Calu3 (cell line): ENCODE measurements at regions of chr6 and their contacts with region 1.

Region 1: GRCh38 chr6:43667245-43668150 is 20.1 kb downstream of the MRPS18A start:
- DNase-seq: peak; percentile 94
- H3K4me3 Mint-ChIP-seq: peak overlapping the region; percentile 43
- H3K27ac Mint-ChIP-seq: peak overlapping the region; percentile 80
- H3K4me1 Mint-ChIP-seq: peaks cover 40% of the 10 kb centered on the region
- H3K27me3 Mint-ChIP-seq: no peaks in the 10 kb centered on the region
- CTCF ChIP-seq: peak; percentile 98

Region 2: GRCh38 chr6:43541774-43542471 is 125.6 kb before region 1 on chr6:
- CTCF ChIA-PET with region 1: no interaction called
- intact Hi-C with region 1: no loop called
- DNase-seq: no peak
- H3K4me3 Mint-ChIP-seq: no peak overlapping the region
- H3K27ac Mint-ChIP-seq: no peak overlapping the region
- H3K4me1 Mint-ChIP-seq: no peaks in the 10 kb centered on the region
- H3K27me3 Mint-ChIP-seq: no peaks in the 10 kb centered on the region
- CTCF ChIP-seq: no peak

Region 3: GRCh38 chr6:43621429-43622180 is 45.9 kb before region 1 on chr6:
- CTCF ChIA-PET with region 1: no interaction called
- intact Hi-C with region 1: no loop called
- DNase-seq: no peak
- H3K4me3 Mint-ChIP-seq: no peak overlapping the region
- H3K27ac Mint-ChIP-seq: peak overlapping the region; percentile 34
- H3K4me1 Mint-ChIP-seq: peaks cover 10% of the 10 kb centered on the region
- H3K27me3 Mint-ChIP-seq: no peaks in the 10 kb centered on the region
- CTCF ChIP-seq: no peak

Region 4: GRCh38 chr6:43687437-43688347 is 20.2 kb after region 1 on chr6 and contains the start of gene MRPS18A:
- CTCF ChIA-PET with region 1: interaction called, 10 read pairs
- intact Hi-C with region 1: no loop called
- DNase-seq: peak; percentile 95
- H3K4me3 Mint-ChIP-seq: peak within 1 kb of the TSS; percentile 97
- H3K27ac Mint-ChIP-seq: peak within 1 kb of the TSS; percentile 93
- H3K4me1 Mint-ChIP-seq: peaks cover 49% of the 10 kb centered on the region
- H3K27me3 Mint-ChIP-seq: no peaks in the 10 kb centered on the region
- CTCF ChIP-seq: no peak
- total RNA-seq, gene MRPS18A: 88.8 and 106 TPM in 2 replicates

Region 5: DNA sequence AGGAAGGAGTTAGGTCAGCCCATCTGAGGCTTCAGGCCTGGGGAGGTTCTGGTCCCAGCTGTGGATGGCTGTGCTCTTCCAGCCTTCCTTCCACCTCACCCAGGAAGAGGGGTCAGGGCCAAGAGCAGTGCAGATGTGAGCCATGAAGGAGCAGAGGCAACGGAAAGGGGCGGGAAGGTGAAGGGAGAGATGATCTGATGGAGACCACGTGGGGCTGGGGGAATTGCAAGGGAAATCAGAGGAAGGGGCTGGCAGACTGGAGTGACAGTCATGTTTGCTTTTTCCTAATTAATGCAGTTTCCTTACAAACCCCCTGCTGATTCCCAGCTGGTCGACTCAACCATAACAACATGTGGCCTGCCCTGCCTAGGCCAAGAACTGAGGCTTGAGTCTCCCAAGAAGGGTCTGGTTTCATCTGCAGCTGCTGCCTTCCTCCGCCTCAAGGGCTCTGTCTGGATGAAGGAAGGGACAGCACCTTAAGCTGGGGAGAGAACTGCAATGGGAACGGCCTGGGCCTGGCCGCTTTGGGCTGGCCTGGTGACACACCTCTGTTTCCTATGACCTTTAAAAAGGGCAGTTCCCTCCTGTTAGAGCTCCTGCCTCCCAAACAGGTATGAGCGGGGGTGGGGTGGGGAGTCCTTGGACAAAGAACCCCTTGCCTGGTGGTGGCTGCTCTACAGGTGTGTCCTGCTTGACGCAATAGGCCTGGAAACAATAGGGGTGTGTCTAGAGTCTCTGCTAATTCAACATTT is 27.9 kb after region 1 on chr6:
- CTCF ChIA-PET with region 1: interaction called, 10 read pairs
- intact Hi-C with region 1: loop called (anchors 5 kb)
- DNase-seq: peak; percentile 95
- H3K4me3 Mint-ChIP-seq: peak overlapping the region; percentile 33
- H3K27ac Mint-ChIP-seq: peak overlapping the region; percentile 81
- H3K4me1 Mint-ChIP-seq: peaks cover 45% of the 10 kb centered on the region
- H3K27me3 Mint-ChIP-seq: no peaks in the 10 kb centered on the region
- CTCF ChIP-seq: no peak

Region 6: DNA sequence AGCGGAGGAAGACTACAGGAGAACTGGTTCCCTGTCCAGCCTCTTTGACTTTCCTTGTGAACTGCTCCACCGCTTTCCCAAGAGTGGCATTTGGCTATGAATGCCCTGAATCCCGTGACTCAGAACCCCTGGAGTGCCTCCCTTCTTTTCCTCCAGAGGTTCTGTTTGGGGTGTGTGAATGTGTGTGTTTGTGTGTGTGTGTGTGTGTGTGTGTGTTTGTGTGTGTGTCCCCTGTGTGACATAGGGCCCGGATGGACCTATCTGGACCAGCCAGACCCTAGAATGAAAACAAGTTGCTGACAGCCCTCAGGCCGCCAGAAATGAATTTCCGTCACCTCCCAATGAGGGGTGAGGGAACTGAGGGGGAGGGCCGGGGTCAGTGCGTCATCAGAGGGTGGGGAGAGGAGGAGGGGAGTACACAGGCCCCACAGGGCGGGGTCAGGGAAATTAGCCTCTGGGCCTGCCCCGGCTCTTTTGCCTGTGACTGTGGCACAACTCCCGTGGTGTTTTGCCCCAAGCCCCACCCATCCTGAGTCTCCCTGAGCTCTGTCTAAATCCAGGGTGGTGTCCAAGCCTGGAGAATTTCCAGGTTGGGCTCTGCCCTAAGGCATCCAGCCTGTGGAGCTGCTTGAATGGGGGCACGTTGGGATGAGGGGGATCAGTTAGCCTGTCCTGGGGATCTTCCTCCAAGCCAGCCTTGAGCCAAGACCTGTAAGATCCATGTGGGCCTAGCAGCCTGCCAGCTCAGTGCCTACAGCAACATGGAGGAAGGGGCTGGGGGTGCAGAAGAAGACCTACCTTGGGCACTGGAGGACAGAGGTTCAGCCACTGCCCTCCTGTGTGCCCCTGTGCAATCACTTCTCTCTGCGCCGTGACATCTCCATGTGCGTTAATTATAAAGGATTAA is 35.3 kb after region 1 on chr6:
- CTCF ChIA-PET with region 1: interaction called, 4 read pairs
- intact Hi-C with region 1: loop called (anchors 5 kb)
- DNase-seq: peak; percentile 98
- H3K4me3 Mint-ChIP-seq: peak overlapping the region; percentile 17
- H3K27ac Mint-ChIP-seq: peak overlapping the region; percentile 58
- H3K4me1 Mint-ChIP-seq: peaks cover 73% of the 10 kb centered on the region
- H3K27me3 Mint-ChIP-seq: no peaks in the 10 kb centered on the region
- CTCF ChIP-seq: no peak

Region 7: DNA sequence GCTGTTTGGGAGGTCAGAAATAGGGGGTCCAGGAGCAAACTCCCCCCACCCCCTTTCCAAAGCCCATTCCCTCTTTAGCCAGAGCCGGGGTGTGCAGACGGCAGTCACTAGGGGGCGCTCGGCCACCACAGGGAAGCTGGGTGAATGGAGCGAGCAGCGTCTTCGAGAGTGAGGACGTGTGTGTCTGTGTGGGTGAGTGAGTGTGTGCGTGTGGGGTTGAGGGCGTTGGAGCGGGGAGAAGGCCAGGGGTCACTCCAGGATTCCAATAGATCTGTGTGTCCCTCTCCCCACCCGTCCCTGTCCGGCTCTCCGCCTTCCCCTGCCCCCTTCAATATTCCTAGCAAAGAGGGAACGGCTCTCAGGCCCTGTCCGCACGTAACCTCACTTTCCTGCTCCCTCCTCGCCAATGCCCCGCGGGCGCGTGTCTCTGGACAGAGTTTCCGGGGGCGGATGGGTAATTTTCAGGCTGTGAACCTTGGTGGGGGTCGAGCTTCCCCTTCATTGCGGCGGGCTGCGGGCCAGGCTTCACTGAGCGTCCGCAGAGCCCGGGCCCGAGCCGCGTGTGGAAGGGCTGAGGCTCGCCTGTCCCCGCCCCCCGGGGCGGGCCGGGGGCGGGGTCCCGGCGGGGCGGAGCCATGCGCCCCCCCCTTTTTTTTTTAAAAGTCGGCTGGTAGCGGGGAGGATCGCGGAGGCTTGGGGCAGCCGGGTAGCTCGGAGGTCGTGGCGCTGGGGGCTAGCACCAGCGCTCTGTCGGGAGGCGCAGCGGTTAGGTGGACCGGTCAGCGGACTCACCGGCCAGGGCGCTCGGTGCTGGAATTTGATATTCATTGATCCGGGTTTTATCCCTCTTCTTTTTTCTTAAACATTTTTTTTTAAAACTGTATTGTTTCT is 102.3 kb after region 1 on chr6 and contains the start of gene VEGFA:
- CTCF ChIA-PET with region 1: interaction called, 41 read pairs
- intact Hi-C with region 1: loop called (anchors 1 kb)
- DNase-seq: peak; percentile 97
- H3K4me3 Mint-ChIP-seq: peak within 1 kb of the TSS; percentile 87
- H3K27ac Mint-ChIP-seq: peak within 1 kb of the TSS; percentile 95
- H3K4me1 Mint-ChIP-seq: peaks cover 52% of the 10 kb centered on the region
- H3K27me3 Mint-ChIP-seq: no peaks in the 10 kb centered on the region
- CTCF ChIP-seq: peak; percentile 99
- total RNA-seq, gene VEGFA: 345 and 407 TPM in 2 replicates

Region 8: DNA sequence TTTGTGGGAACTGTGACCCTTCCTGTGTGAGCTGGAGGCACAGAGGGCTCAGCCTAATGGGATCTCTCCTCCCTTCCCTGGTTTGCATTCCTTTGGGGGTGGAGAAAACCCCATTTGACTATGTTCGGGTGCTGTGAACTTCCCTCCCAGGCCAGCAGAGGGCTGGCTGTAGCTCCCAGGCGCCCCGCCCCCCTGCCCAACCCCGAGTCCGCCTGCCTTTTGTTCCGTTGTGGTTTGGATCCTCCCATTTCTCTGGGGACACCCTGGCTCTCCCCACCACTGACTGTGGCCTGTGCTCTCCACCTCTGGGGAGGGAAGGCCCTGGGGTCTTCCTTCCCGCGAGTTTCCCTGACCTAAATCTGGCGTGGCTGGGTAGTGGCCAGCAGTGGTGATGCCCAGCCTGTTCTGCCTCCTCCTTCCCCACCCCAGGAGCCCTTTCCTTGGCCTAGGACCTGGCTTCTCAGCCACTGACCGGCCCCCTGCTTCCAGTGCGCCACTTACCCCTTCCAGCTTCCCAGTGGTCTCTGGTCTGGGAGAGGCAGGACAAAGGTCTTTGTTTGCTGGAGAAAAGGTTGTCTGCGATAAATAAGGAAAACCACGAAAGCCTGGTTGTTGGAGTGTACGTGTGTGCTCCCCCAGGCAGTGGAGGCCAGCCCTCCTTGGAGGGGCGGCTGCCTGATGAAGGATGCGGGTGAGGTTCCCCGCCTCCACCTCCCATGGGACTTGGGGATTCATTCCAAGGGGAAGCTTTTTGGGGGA is 107.5 kb after region 1 on chr6:
- CTCF ChIA-PET with region 1: interaction called, 41 read pairs
- intact Hi-C with region 1: no loop called
- DNase-seq: peak; percentile 88
- H3K4me3 Mint-ChIP-seq: peak overlapping the region; percentile 87
- H3K27ac Mint-ChIP-seq: peak overlapping the region; percentile 85
- H3K4me1 Mint-ChIP-seq: peaks cover 45% of the 10 kb centered on the region
- H3K27me3 Mint-ChIP-seq: no peaks in the 10 kb centered on the region
- CTCF ChIP-seq: peak; percentile 98

Region 9: DNA sequence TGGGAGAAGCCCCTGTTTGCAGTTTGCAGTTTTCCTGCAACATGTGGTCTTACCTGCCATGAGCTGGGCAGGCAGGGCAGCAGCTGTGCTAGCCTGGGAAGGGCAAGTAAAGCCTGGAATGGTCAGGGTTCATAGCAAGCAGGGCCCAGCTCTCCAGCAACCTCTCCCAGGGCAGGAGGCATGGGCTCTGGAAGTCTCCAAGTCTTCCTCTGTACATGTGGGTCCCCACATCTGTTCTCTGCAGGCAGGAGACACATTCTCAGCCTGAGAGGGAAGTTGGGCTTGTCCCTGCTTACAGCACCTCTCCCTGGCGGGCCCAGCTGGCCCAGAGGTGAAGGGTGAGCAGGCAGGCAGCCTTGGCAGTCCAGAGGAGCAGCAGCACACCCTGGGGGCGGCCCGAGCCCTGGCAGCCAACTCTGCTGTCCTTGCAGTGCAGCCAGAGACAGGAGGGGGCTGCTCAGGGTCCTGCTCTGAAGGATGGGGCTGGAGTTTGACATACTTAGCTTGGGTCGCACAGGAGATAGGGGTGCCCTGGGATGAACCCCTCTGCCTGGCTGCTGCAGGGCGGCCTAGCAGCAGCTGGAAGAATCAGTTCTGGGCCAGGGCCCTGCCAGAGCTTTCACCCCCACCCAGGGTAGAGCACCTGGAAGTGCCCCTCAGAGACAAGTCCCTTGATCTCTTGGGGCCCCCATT is 283.7 kb after region 1 on chr6:
- CTCF ChIA-PET with region 1: interaction called, 3 read pairs
- intact Hi-C with region 1: loop called (anchors 5 kb)
- DNase-seq: peak; percentile 91
- H3K4me3 Mint-ChIP-seq: no peak overlapping the region
- H3K27ac Mint-ChIP-seq: no peak overlapping the region
- H3K4me1 Mint-ChIP-seq: peaks cover 32% of the 10 kb centered on the region
- H3K27me3 Mint-ChIP-seq: no peaks in the 10 kb centered on the region
- CTCF ChIP-seq: peak; percentile 74